ENCODE measurements at regions of chr11 and their contacts with region 1.

Region 1: GRCh38 chr11:128831174-128832120 is 35.6 kb downstream of the KCNJ1 start:
- DNase-seq: peak; percentile 53 to 86
- ATAC-seq: peak; percentile 85

Region 2: DNA sequence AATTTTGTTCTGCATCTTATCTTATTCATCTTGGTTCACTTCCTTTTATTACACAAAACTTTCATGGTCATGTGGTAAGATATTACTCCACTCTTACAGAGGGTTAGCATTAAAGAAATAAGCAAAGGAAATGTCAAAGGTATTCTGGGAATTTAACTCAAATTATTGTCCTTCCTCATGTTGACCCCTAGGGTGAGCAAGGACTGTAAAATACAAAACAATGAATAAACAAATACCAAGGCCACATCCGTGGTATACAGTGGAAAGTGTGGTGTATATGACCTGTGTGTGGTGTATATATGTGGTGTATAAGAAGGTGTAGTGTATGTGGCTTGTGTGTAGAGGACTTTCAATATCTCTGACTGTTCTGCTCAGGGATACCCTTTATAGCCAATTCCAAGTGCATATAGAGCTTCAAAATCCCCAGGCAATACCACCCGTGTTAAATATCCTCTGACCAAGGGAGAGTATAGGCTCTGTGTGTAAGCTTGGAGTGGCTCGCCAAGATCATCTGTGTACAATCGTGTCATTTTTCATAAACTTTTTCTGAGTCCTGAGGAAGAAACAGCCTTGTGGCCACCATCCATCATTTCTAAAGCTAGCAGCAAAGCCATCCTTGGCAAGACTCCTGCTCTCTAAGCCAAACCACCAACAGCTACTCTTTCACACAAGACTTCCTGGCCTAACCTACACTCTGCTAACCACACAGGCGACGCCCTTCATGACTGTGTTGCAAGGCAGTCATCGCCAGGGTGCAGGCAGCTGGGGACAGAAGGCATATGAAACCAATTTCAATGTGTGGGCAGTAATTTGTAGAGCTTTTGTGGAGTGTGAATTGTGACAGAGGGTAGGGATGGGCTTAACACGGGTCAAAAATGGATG is 792.1 kb before region 1 on chr11:
- intact Hi-C with region 1: loop called in 1 of 2 experiments (anchors 10 kb)
- DNase-seq: peak; percentile 18 to 29
- ATAC-seq: peak; percentile 44

Region 3: DNA sequence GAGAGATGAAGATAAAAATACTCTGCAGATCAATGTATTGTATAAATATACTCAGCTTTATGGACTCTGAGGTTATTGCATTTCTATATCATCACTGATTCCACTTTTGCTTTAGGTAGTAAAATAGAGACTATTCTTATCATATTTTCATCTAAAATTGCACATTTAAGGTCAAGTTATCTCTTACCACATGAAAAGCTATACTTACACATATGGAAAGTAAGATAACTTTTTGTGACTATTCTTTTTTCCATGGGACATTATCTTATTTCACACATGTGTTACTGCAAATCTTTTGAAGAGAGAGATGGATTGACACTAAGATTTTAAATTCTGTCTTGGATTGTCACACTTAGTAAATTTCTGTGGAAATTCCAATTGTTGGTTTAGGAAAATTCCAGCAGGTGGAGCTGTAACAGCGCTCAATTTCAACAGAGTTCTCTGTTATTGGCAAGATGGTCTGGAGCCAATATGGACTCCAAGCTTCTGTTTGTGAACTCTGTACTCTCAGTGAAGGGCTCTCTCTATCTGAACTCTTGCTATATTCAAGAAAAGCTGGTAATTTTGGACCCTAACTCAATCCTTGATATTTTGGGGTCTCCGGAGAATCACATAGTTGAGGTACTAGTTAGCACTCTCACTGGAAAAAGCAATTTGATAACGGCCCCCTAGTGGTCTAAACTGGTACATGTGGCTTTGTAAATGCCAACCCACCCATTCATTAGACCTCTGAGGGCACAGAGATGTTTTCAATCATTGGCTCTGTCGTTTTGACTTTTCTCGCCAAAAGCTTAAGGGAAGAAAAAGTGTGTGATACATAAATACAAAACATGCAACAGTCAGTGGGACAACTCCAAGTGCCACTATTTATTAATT is 673.8 kb before region 1 on chr11:
- intact Hi-C with region 1: loop called in 1 of 2 experiments (anchors 5 kb)
- DNase-seq: peak in 1 of 2 donors; percentile 40
- ATAC-seq: peak; percentile 83

Region 4: GRCh38 chr11:128172046-128172878 is 659.2 kb before region 1 on chr11:
- intact Hi-C with region 1: loop called in 1 of 2 experiments (anchors 5 kb)
- DNase-seq: peak; percentile 60 to 91
- ATAC-seq: peak; percentile 76

Region 5: DNA sequence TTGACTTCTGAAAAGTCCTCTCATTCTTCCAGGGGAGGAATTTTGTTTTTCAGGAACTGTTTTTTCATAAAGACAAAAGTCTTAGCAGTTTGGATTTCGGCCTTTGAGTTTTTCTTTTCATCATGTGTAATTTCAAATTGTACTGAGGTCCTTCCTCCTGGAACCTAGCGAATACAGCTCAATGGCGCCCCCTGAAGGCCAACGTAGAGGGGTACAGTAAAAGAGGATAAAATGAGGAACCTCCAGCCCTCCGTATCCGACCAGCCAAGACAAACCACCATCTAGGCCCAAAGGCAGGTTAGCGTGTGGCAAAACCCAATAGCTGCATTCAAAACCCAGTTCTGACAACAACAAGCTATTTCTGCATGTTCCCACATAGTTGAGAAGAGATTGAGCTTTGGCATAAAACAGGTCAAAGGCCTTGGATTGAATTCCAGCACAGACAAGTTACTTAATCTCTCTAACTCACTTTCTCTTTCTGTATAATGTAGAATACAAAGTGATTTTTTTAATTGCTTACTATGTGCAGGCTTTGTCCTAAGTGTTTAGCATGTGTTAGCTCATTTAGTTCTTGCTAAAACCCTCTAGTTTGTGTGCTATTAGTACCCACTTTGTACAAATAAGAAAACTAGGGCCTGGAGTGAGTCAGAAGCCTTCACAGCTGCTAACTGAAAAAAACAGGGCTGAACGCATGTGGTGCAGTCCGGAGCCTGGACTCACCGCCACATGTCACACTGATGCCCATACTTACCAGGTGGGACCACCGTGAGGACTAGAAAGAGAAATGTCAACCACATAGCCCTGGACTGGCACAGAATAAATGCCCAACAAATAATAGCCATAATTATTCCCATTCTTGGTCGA is 200.8 kb before region 1 on chr11:
- intact Hi-C with region 1: loop called in 1 of 2 experiments (anchors 5 kb)
- DNase-seq: peak; percentile 86 to 93
- ATAC-seq: peak; percentile 96

Region 6: GRCh38 chr11:128988242-128988970 is 157.0 kb after region 1 on chr11:
- intact Hi-C with region 1: no loop called
- DNase-seq: no peak
- ATAC-seq: peak; percentile 42